ENCODE measurements at regions of chr12 and their contacts with region 1.

Region 1: DNA sequence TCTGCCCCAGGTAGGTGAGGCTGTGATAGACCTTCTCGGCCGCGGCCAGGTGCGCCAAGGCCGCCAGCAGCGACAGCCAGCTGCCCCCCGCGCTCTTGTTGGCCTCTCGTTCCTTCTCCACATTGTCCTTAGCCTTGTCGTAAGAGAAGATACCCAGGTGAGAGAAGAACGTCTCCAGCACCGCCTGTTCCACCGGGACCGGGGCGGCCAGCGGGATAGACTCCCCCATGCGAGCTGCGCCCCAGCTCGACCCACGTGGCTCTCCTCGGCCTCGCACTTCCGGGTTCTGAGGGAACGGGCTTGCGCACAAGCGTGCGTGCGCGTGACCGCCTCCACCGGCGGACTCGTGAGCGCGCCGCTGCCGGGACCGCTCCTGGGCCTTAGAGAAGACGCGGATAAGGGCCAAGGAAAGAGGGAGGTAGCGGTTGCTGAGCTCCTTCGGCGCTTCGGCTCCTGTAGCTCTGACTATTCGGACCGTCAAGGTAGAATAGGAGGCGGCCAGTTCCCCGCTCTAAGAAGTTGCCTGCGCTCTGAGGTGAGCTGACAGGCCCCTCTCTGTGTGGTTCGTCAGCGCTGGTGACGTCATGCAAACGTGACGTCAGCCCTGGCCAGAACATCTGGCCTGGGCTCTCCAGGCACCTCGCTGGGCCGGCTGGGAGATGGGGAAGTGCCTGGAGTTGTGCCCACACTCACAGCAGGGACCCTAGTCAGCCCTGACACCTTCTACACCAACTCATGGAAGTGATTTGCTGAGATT is at the start of gene KICS2:
- DNase-seq: peak; percentile 80 to 93
- H3K4me3 ChIP-seq: peak within 1 kb of the TSS; percentile 73
- H3K27ac ChIP-seq: peak within 1 kb of the TSS; percentile 89
- H3K4me1 ChIP-seq: peaks cover 29% of the 10 kb centered on the region
- H3K27me3 ChIP-seq: no peaks in the 10 kb centered on the region
- CTCF ChIP-seq: no peak
- total RNA-seq, gene KICS2: 12.1 and 14.5 TPM in 2 replicates

Region 2: GRCh38 chr12:64039281-64039871 is 182.8 kb before region 1 on chr12:
- CTCF ChIA-PET with region 1: no interaction called
- POLR2A ChIA-PET with region 1: no interaction called
- intact Hi-C with region 1: no loop called
- DNase-seq: no peak
- H3K4me3 ChIP-seq: no peak overlapping the region
- H3K27ac ChIP-seq: no peak overlapping the region
- H3K4me1 ChIP-seq: no peaks in the 10 kb centered on the region
- H3K27me3 ChIP-seq: no peaks in the 10 kb centered on the region
- CTCF ChIP-seq: no peak

Region 3: DNA sequence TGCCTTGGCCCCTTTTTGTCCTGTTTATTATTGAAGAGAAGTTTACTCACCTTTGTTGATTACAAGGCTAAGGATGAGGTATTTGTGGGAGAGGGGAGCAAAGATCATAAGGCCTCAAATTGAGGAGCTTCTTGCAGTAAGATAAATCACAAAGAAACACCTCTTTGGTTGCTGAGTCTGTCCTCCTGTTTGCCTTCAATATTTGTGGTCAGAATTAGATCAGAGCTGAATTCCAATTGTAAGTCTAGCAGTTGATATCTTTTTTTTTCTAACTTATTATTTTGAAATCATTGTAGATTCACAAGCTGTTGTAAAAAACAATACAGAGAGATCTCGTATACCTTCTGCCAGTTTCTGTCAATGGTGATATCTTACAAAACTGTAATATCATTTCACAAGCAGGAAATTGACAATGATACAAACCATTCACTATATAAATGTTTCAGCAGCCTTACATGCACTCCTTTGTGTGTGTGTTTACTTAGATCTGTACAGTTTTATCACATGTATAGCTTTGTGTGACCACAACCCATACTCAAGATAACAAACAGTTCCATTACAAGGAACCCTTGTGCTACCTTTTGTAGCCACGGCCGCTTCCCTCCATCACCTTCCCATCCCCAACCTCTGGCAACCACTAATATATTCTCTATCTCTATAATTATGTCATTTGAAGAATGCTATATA is 97.5 kb before region 1 on chr12:
- CTCF ChIA-PET with region 1: no interaction called
- POLR2A ChIA-PET with region 1: no interaction called
- intact Hi-C with region 1: no loop called
- DNase-seq: no peak
- H3K4me3 ChIP-seq: no peak overlapping the region
- H3K27ac ChIP-seq: no peak overlapping the region
- H3K4me1 ChIP-seq: peaks cover 15% of the 10 kb centered on the region
- H3K27me3 ChIP-seq: no peaks in the 10 kb centered on the region
- CTCF ChIP-seq: no peak

Region 4: DNA sequence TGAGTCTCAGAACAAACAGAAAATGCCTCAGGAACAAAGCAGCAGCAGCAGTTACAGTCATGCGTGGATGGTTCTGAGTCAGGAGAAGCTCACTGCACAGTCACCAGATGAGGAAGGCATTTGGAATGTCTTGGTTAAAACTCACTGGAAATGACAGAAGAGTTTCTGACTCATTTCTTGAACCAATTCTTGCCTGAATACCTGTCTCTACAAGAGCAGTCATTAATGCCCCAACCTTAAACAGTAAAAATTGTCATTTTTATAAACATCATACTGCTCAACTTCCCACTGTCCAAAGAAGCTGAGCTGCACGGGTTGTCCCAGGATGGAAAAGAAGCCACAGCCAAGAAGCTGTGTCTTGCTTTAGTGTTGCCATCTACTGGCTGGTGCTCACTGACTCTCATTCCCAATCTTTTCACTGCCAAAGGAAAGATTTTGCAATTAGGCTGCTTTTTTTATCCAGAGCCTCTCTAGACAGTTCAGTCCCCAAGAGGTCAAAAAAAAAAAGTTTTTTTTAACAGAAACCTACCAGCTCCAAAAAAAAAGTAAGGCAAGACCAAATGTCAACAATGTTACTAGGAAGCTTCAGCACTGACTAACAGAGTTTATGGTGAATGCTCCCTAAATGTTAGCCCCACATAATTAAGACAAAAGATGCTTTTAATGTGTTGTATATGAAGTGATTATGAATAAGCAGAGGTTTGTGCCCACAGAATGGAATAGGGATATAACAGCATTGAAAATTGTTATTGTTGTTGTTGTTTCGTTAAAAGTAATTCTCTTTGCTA is 40.5 kb before region 1 on chr12:
- CTCF ChIA-PET with region 1: no interaction called
- POLR2A ChIA-PET with region 1: no interaction called
- intact Hi-C with region 1: loop called (anchors 2 kb)
- DNase-seq: peak; percentile 58 to 96
- H3K4me3 ChIP-seq: peak overlapping the region; percentile 3; the same call in 1 of the 2 replicates
- H3K27ac ChIP-seq: peak overlapping the region; percentile 79
- H3K4me1 ChIP-seq: peaks cover 50% of the 10 kb centered on the region
- H3K27me3 ChIP-seq: no peaks in the 10 kb centered on the region
- CTCF ChIP-seq: peak; percentile 51; the same call in 1 of the 2 replicates

Region 5: GRCh38 chr12:64203036-64203435 is 19.2 kb before region 1 on chr12:
- CTCF ChIA-PET with region 1: no interaction called
- POLR2A ChIA-PET with region 1: no interaction called
- intact Hi-C with region 1: no loop called
- DNase-seq: no peak
- H3K4me3 ChIP-seq: no peak overlapping the region
- H3K27ac ChIP-seq: no peak overlapping the region
- H3K4me1 ChIP-seq: no peaks in the 10 kb centered on the region
- H3K27me3 ChIP-seq: no peaks in the 10 kb centered on the region
- CTCF ChIP-seq: no peak